AG04449 (cell line): ENCODE measurements at regions of chr2 and their contacts with region 1.

Region 1: GRCh38 chr2:198127627-198128026 is 323.2 kb downstream of the PLCL1 start:
- DNase-seq: no peak
- H3K4me3 ChIP-seq: no peak overlapping the region
- CTCF ChIP-seq: peak; percentile 64

Region 2: DNA sequence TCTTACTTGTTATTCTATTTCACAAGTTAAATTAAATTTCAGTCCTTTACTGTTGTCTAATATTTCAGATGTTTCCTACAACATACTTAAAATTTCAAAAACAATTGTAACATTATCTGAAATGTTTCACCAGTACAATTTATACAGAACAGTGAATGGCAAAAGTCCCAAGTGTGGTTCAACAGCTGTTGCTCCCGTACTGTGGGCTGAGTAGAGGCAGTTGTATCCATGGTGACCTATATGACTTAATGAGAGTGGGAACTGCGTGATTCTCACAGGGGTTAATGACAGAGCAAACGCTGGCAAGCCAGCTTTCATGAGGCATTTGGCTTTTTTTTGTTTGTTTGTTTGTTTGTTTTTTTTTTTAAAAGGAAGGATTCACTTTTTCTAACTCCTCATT is 328.6 kb before region 1 on chr2:
- CTCF ChIA-PET with region 1: interaction called, 42 read pairs
- POLR2A ChIA-PET with region 1: no interaction called
- DNase-seq: no peak
- H3K4me3 ChIP-seq: no peak overlapping the region
- CTCF ChIP-seq: no peak

Region 3: GRCh38 chr2:197804049-197804757 is 323.4 kb before region 1 on chr2 and contains the start of gene PLCL1:
- CTCF ChIA-PET with region 1: interaction called, 42 read pairs
- POLR2A ChIA-PET with region 1: no interaction called
- DNase-seq: peak; percentile 60
- H3K4me3 ChIP-seq: peak within 1 kb of the TSS; percentile 67
- CTCF ChIP-seq: no peak

Region 4: GRCh38 chr2:198004921-198005829 is 122.5 kb before region 1 on chr2:
- CTCF ChIA-PET with region 1: no interaction called
- POLR2A ChIA-PET with region 1: no interaction called
- DNase-seq: no peak
- H3K4me3 ChIP-seq: no peak overlapping the region
- CTCF ChIP-seq: no peak

Region 5: GRCh38 chr2:198173242-198173641 is 45.6 kb after region 1 on chr2:
- CTCF ChIA-PET with region 1: no interaction called
- POLR2A ChIA-PET with region 1: no interaction called
- DNase-seq: no peak
- H3K4me3 ChIP-seq: no peak overlapping the region
- CTCF ChIP-seq: no peak